ENCODE measurements at regions of chr2 and their contacts with region 1.

Region 1: DNA sequence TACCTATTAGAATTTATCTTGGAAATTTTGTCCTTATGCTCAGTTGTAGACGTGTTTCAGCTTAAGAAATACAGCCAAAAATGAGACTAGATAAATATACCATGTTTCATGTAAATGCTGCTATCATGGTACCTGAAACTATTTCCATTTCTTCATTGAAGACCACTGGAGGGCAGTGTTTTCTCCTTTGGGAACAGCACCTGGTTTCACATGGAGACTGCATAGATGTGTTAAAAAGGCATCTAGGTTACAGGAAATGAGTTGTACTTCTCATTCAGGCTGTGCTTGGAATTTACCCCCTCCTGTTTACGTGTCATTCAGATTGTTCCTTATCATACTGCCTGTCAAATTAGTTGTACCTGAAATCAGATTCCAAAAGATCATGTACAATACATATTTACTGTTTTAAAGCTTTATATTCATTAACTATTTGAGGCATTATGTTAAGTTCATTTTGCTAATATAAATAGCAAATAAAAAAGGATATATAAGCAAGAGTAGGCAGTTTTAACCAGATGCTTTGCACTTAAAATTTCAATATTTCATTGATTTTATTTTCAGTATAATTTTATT is 57.3 kb upstream of the PSMD14 start:
- DNase-seq: peak in 2 of 9 donors; percentile 9 to 23
- ATAC-seq: peak; percentile 56
- H3K4me3 ChIP-seq: no peak overlapping the region
- H3K4me3 Mint-ChIP-seq: no peak overlapping the region
- H3K27ac ChIP-seq: no peak overlapping the region
- H3K27ac Mint-ChIP-seq: peak overlapping the region in 1 of 9 donors; percentile 19
- H3K4me1 ChIP-seq: peaks cover 0 to 4% of the 10 kb centered on the region in 2 donors
- H3K4me1 Mint-ChIP-seq: peaks cover 7 to 30% (median 17%) of the 10 kb centered on the region in 7 donors
- H3K27me3 ChIP-seq: no peaks in the 10 kb centered on the region
- H3K27me3 Mint-ChIP-seq: no peaks in the 10 kb centered on the region

Region 2: GRCh38 chr2:161232571-161232970 is 18.4 kb before region 1 on chr2:
- CTCF ChIA-PET with region 1: interaction called, 10 read pairs
- POLR2A ChIA-PET with region 1: interaction called, 6 read pairs
- intact Hi-C with region 1: no loop called
- DNase-seq: no peak
- ATAC-seq: no peak
- H3K4me3 ChIP-seq: no peak overlapping the region
- H3K4me3 Mint-ChIP-seq: no peak overlapping the region
- H3K27ac ChIP-seq: no peak overlapping the region
- H3K27ac Mint-ChIP-seq: peak overlapping the region in 1 of 9 donors; percentile 18
- H3K4me1 ChIP-seq: peaks cover 7 to 8% of the 10 kb centered on the region in 2 donors
- H3K4me1 Mint-ChIP-seq: peaks cover 0 to 28% (median 7%) of the 10 kb centered on the region in 7 donors
- H3K27me3 ChIP-seq: no peaks in the 10 kb centered on the region
- H3K27me3 Mint-ChIP-seq: no peaks in the 10 kb centered on the region